Gastrocnemius medialis (tissue), 4 donors: ENCODE measurements at regions of chr13 and their contacts with region 1.

Region 1: GRCh38 chr13:39616087-39616694 is 13.2 kb upstream of the LHFPL6 start:
- DNase-seq: peak in 1 of 2 donors; percentile 22
- ATAC-seq: peak; percentile 80 to 87
- H3K4me3 ChIP-seq: no peak overlapping the region
- H3K27ac ChIP-seq: no peak overlapping the region
- H3K4me1 ChIP-seq: no peaks in the 10 kb centered on the region
- H3K27me3 ChIP-seq: no peaks in the 10 kb centered on the region
- CTCF ChIP-seq: peak; percentile 53 to 87 (median 61)
- POLR2A ChIP-seq: no peak

Region 2: DNA sequence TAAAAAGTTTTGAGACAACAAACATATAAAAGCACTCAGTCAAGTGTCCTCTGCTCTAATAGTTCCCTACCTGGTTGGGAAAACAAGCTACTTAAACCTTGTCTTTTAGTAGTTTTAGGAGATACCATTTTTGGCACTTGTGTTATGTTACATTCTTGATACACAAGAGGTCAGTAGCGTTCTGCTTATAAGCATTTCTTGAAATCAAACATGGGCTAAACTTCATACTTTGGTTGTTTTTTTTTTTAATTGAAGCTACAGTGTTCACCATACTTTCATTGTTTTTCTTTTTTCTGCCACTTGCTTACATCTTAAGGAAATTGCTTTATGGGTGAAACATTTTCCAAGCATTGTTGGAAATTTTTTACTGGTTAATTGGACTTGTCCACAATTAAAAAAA is 565.0 kb before region 1 on chr13:
- in situ Hi-C with region 1: loop called in 3 of 4 experiments (anchors 5 to 25 kb)
- intact Hi-C with region 1: loop called (anchors 5 kb)
- DNase-seq: no peak
- ATAC-seq: no peak
- H3K4me3 ChIP-seq: no peak overlapping the region
- H3K27ac ChIP-seq: no peak overlapping the region
- H3K4me1 ChIP-seq: no peaks in the 10 kb centered on the region
- H3K27me3 ChIP-seq: no peaks in the 10 kb centered on the region
- CTCF ChIP-seq: peak in 2 of 5 experiments; percentile 6 to 29
- POLR2A ChIP-seq: no peak

Region 3: GRCh38 chr13:39144941-39145533 is 471.2 kb before region 1 on chr13:
- in situ Hi-C with region 1: loop called (anchors 5 kb)
- intact Hi-C with region 1: loop called (anchors 2 kb)
- DNase-seq: peak; percentile 18 to 24
- ATAC-seq: peak; percentile 53 to 57
- H3K4me3 ChIP-seq: no peak overlapping the region
- H3K27ac ChIP-seq: no peak overlapping the region
- H3K4me1 ChIP-seq: peaks cover 0 to 3% of the 10 kb centered on the region in 2 donors
- H3K27me3 ChIP-seq: no peaks in the 10 kb centered on the region
- CTCF ChIP-seq: peak in 4 of 5 experiments; percentile 31 to 70 (median 61)
- POLR2A ChIP-seq: no peak

Region 4: DNA sequence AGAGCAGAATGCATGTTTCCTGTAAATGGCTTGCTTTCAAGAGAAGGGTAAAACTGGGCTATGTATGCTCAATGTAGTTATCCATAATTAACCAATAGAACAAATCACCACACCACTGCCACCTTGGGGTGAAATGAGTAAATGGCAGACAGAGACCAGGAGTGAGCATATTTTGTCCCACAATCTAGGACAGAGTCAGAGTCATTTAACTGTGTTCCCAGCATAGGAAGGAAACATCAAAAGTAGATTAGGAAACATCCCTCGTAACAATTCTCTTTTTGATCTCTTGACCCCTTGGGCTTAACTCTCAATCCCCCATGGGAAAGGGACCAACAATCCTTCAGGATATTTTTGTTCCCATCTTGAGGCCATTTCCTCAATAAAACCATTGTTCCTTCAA is 353.2 kb before region 1 on chr13:
- in situ Hi-C with region 1: loop called in 3 of 4 experiments (anchors 5 to 25 kb)
- intact Hi-C with region 1: loop called (anchors 5 kb)
- DNase-seq: no peak
- ATAC-seq: peak; percentile 68 to 76
- H3K4me3 ChIP-seq: no peak overlapping the region
- H3K27ac ChIP-seq: peak overlapping the region in 1 of 4 donors; percentile 13
- H3K4me1 ChIP-seq: peaks cover 14 to 31% of the 10 kb centered on the region in 2 donors
- H3K27me3 ChIP-seq: no peaks in the 10 kb centered on the region
- CTCF ChIP-seq: peak; percentile 32 to 58 (median 42)
- POLR2A ChIP-seq: no peak

Region 5: GRCh38 chr13:39269411-39269810 is 346.8 kb before region 1 on chr13:
- in situ Hi-C with region 1: loop called in 3 of 4 experiments (anchors 5 to 25 kb)
- intact Hi-C with region 1: loop called (anchors 5 kb)
- DNase-seq: no peak
- ATAC-seq: no peak
- H3K4me3 ChIP-seq: no peak overlapping the region
- H3K27ac ChIP-seq: no peak overlapping the region
- H3K4me1 ChIP-seq: no peaks in the 10 kb centered on the region
- H3K27me3 ChIP-seq: no peaks in the 10 kb centered on the region
- CTCF ChIP-seq: no peak
- POLR2A ChIP-seq: no peak

Region 6: GRCh38 chr13:39415008-39415802 is 201.0 kb before region 1 on chr13:
- in situ Hi-C with region 1: no loop called
- intact Hi-C with region 1: loop called (anchors 10 kb)
- DNase-seq: peak; percentile 12 to 21
- ATAC-seq: peak; percentile 79 to 82
- H3K4me3 ChIP-seq: peak overlapping the region in 1 of 4 donors; percentile 7
- H3K27ac ChIP-seq: peak overlapping the region; percentile 51 to 76 (median 70)
- H3K4me1 ChIP-seq: peaks cover 7 to 56% of the 10 kb centered on the region in 2 donors
- H3K27me3 ChIP-seq: no peaks in the 10 kb centered on the region
- CTCF ChIP-seq: peak in 2 of 5 experiments; percentile 27 to 37
- POLR2A ChIP-seq: no peak

Region 7: DNA sequence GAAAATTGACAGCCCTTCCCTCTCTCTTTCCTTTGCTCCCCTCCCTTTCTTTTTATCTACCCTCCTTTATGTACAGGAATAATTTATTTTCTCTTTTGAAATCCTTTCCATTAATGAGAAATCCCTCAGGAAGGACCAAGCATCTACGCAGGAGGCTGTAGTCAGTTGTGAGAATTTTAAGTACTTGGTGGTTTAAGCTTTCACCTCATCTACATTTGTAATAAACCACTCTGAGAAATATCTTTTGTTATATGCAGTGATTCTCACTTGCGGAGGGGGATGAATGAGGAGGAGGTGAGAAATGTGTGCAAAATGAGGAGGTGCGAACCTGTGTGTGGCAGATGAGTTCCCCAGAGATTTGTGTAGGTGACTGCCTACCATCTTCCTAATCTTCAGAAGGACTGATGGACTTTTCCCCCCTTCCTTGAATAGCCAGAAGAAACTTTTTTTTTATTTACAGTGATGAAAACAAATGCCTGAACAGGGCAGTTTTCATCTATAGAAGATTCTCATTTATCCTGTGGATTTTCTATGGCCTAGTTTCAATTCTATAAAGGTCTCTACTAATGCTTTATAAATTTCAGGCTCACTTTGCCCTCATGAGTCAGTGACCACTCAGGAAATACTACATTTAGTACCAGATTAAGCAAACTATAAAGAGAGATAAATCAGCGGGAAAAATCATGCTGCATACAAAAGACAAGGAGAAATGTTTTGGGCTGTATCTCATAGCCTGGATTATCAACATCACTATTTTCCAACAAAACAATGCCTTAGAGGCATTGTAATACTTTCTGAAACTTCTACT is 131.5 kb before region 1 on chr13:
- in situ Hi-C with region 1: no loop called
- intact Hi-C with region 1: no loop called
- DNase-seq: no peak
- ATAC-seq: no peak
- H3K4me3 ChIP-seq: no peak overlapping the region
- H3K27ac ChIP-seq: no peak overlapping the region
- H3K4me1 ChIP-seq: peaks cover 0 to 12% of the 10 kb centered on the region in 2 donors
- H3K27me3 ChIP-seq: no peaks in the 10 kb centered on the region
- CTCF ChIP-seq: no peak
- POLR2A ChIP-seq: no peak

Region 8: DNA sequence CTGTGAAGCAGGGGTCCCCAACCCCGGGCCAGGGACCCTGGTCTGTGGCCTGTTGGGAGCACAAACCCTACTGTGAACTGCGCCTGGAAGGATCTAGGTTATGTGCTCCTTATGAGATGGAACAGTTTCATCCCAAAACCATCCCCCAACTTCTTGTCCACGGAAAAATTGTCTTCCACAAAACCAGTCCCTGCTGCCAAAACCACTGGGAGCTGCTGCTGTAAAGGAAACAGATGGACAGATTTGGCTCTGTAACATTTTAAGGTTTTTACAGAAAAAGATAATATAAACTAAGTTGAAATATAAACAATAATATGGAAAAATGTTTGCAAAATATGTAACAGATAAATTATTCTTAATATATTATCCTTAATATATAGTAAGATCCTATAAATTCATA is 113.0 kb after region 1 on chr13:
- in situ Hi-C with region 1: no loop called
- intact Hi-C with region 1: no loop called
- DNase-seq: no peak
- ATAC-seq: no peak
- H3K4me3 ChIP-seq: no peak overlapping the region
- H3K27ac ChIP-seq: no peak overlapping the region
- H3K4me1 ChIP-seq: no peaks in the 10 kb centered on the region
- H3K27me3 ChIP-seq: no peaks in the 10 kb centered on the region
- CTCF ChIP-seq: no peak
- POLR2A ChIP-seq: no peak

Region 9: GRCh38 chr13:39855236-39855635 is 239.0 kb after region 1 on chr13:
- in situ Hi-C with region 1: no loop called
- intact Hi-C with region 1: no loop called
- DNase-seq: no peak
- ATAC-seq: no peak
- H3K4me3 ChIP-seq: no peak overlapping the region
- H3K27ac ChIP-seq: no peak overlapping the region
- H3K4me1 ChIP-seq: no peaks in the 10 kb centered on the region
- H3K27me3 ChIP-seq: no peaks in the 10 kb centered on the region
- CTCF ChIP-seq: no peak
- POLR2A ChIP-seq: no peak